Dendritic cell treated with granulocyte-macrophage colony-stimulating factor and Interleukin-4, amounts not matched to agents 40 ng/mL and 50 ng/mL, for 4 days (primary cell): ENCODE measurements at regions of chr4 and their contacts with region 1.

Region 1: GRCh38 chr4:184845367-184846021 is 19.7 kb upstream of the ACSL1 start:
- H3K4me3 Mint-ChIP-seq: no peak overlapping the region
- H3K27ac Mint-ChIP-seq: peak overlapping the region; percentile 57
- H3K4me1 Mint-ChIP-seq: peaks cover 41% of the 10 kb centered on the region
- H3K27me3 Mint-ChIP-seq: no peaks in the 10 kb centered on the region

Region 2: DNA sequence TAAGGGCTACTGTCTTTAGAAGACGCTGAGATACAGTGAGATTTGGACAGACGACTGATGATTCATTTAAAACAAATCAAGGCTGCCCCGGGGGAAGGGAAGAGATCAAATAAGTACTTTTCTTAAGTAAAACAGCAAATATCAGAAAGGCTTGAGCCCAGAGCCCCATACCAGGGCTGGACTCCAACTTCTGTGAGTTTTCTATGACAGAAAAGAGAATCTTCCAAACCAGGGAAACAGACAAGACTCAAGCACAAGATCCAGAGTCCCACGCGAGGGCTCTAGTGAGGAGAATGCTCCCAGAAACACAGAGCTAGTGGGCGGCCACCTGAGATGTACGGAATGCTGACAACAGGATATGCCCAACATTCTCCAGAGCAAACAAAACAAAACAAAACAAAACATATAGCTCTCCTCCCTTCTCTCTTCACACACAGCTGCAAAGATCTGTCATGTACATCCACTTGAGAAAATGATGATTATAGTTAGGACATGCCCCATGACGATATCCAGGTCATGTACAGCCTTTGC is 32.8 kb before region 1 on chr4:
- intact Hi-C with region 1: loop called (anchors 5 kb)
- H3K4me3 Mint-ChIP-seq: no peak overlapping the region
- H3K27ac Mint-ChIP-seq: peak overlapping the region; percentile 67
- H3K4me1 Mint-ChIP-seq: peaks cover 91% of the 10 kb centered on the region
- H3K27me3 Mint-ChIP-seq: no peaks in the 10 kb centered on the region